Activated CD8-positive, alpha-beta T cell treated with anti-CD3 and anti-CD28 coated beads for 36 hours (primary cell): ENCODE measurements at regions of chr6 and their contacts with region 1.

Region 1: DNA sequence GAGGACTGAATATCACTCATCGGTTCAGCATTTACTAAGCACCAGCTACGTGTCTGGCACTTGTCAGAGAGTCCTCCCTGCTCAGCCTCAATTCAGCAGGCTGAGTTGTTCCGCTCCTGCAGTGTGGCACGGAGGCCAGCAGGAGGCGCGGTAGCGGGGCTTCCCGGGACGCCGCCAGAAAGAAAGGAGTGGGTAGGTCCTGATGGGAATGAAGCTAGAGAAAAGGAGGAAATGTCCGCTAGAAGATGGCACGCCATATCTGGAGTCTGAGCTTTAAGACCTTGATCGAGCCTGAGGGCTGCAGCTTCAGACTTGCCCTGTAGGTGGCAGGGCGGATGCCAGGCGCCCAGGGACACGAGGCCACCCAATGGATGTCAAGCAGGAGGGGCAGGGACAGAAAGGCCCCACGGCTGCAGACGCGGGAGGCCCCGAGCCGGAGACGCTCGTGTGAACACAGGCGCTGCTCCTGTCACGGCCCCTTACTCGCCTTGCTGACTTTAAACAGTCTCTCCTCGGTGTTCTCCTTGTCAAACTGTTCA is 18.7 kb downstream of the SERPINB6 start:
- DNase-seq: peak; percentile 77
- ATAC-seq: peak; percentile 97
- H3K4me3 Mint-ChIP-seq: peak overlapping the region; percentile 44
- H3K27ac Mint-ChIP-seq: peak overlapping the region; percentile 68
- H3K4me1 Mint-ChIP-seq: peaks cover 13% of the 10 kb centered on the region
- H3K27me3 Mint-ChIP-seq: no peaks in the 10 kb centered on the region
- CTCF ChIP-seq: peak; percentile 99

Region 2: DNA sequence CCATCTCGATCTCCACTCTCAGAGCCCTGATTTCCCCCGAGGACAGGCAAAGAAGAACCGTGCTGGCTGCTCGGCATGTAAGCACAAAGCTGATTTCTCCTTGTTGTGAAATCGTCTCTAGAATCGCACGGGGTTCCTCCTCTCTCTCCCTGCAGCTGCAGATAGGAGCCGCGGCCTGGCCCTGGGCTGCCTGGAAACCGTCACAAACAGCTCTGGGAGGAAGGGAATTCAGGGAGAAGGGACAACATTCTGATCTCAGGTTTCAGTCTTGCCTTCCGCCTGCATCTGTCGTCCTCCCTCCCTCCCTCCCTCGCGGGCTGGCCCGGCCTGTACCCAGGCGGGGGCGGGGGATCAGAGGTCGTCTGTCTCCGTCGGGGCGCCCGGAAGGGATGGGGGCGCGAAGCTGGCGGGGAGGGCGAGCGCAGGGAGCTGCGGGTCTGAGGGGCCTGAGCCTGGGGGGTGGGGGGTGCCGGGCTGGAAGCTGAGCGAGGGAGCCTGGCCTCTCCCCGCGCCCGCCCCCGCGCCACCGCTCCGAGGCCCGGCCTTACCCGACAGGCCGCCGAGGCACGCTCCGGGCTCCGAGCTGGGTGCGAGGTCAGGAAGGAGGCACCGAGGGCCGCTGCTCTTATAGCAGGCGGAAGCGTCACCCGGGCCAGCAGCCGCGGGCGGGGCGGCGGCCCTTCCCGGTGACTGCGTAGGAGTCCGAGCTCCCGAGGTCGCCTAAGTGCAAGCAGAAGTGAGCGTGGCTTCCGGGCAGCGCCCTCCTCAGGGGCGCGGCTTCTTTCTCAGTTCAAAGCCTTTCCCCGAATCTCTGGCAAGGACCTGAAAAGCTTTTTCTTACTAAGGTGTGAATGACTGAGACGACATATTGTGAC is 111.1 kb before region 1 on chr6 and contains the start of gene SERPINB1:
- CTCF ChIA-PET with region 1: interaction called, 21 read pairs
- POLR2A ChIA-PET with region 1: interaction called, 4 read pairs
- intact Hi-C with region 1: no loop called
- DNase-seq: peak; percentile 95
- ATAC-seq: peak; percentile 90
- H3K4me3 Mint-ChIP-seq: peak within 1 kb of the TSS; percentile 85
- H3K27ac Mint-ChIP-seq: peak within 1 kb of the TSS; percentile 92
- H3K4me1 Mint-ChIP-seq: peaks cover 65% of the 10 kb centered on the region
- H3K27me3 Mint-ChIP-seq: no peaks in the 10 kb centered on the region
- CTCF ChIP-seq: no peak
- total RNA-seq, gene SERPINB1: 55.8 to 60.0 TPM

Region 3: GRCh38 chr6:2940010-2940850 is 12.4 kb before region 1 on chr6:
- CTCF ChIA-PET with region 1: interaction called, 70 read pairs
- POLR2A ChIA-PET with region 1: interaction called, 7 read pairs
- intact Hi-C with region 1: no loop called
- DNase-seq: peak; percentile 94
- ATAC-seq: peak; percentile 88
- H3K4me3 Mint-ChIP-seq: peak overlapping the region; percentile 54
- H3K27ac Mint-ChIP-seq: peak overlapping the region; percentile 96
- H3K4me1 Mint-ChIP-seq: peaks cover 66% of the 10 kb centered on the region
- H3K27me3 Mint-ChIP-seq: no peaks in the 10 kb centered on the region
- CTCF ChIP-seq: no peak

Region 4: DNA sequence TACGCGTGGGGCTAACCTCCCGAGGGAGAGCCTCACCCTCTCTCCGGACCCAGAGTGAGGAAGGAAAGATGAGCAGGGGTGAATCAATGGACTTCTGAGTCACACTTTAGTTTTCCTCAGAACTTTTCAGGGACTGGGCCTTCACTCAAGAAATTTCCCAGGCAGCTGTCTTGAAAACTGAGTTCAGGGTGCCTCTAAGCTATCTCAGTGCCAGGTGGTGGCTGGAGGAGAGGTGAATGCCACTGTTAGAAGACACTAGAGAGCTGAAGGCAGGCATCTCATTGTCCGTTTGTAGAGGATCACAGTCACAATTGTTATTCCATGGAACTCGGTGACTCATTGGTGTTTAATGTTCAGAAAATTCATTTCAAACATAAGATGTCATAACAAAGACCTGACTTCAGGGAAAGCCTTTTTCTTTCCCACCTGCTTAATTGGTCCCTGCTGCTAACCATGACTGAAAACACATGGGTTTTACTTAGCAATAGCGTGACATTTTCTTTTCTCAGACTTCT is 24.0 kb after region 1 on chr6:
- CTCF ChIA-PET with region 1: interaction called, 21 read pairs
- POLR2A ChIA-PET with region 1: interaction called, 5 read pairs
- intact Hi-C with region 1: no loop called
- DNase-seq: no peak
- ATAC-seq: no peak
- H3K4me3 Mint-ChIP-seq: no peak overlapping the region
- H3K27ac Mint-ChIP-seq: peak overlapping the region; percentile 66
- H3K4me1 Mint-ChIP-seq: peaks cover 40% of the 10 kb centered on the region
- H3K27me3 Mint-ChIP-seq: peaks cover 2% of the 10 kb centered on the region
- CTCF ChIP-seq: no peak

Region 5: GRCh38 chr6:2988426-2989331 is 36.1 kb after region 1 on chr6:
- CTCF ChIA-PET with region 1: interaction called, 85 read pairs
- POLR2A ChIA-PET with region 1: interaction called, 9 read pairs
- intact Hi-C with region 1: no loop called
- DNase-seq: peak; percentile 83
- ATAC-seq: peak; percentile 82
- H3K4me3 Mint-ChIP-seq: peak overlapping the region; percentile 95
- H3K27ac Mint-ChIP-seq: peak overlapping the region; percentile 100
- H3K4me1 Mint-ChIP-seq: peaks cover 19% of the 10 kb centered on the region
- H3K27me3 Mint-ChIP-seq: no peaks in the 10 kb centered on the region
- CTCF ChIP-seq: peak; percentile 71